ENCODE measurements at regions of chr22 and their contacts with region 1.

Region 1: DNA sequence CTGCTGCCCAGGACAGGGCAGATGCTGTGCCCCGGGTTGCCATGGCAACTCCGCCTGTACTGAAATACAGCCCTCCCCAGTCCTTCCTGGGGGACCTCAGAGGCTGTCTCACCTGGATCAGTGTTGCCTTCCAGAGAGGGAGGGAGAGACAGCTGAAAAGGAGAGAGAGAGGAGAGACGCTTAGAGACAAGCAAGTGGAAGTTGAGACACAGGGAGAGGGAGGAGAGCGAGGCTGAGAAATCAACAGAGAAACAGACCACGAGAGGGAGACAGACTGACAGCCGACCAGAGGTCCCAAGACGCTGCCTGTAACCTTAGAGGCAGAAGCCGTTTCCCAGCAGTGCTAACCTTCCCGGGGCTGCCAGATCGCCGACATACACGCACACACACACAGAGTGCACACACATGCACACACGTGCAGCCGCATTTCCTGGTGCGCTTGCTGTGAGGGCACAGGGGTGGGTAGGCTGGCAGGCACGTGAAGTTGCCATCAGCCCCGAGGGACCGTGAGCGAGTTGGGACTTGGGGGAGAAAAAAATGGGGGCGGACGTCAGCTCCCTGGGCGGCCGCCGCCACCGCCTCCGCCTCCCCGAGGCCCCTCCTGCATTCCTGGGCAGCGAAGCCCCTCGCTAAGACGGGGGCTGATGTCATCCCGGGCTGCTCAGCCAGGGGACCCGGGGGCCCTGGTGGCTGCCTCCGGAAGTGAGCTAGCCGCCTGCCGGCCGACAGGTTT is 88.6 kb upstream of the CRYBB3 start:
- DNase-seq: peak; percentile 61 to 81
- H3K4me3 ChIP-seq: peak overlapping the region; percentile 52 to 81 (median 66)
- H3K27ac ChIP-seq: peak overlapping the region; percentile 73
- H3K4me1 ChIP-seq: peaks cover 0 to 19% (median 9%) of the 10 kb centered on the region in 4 experiments; a peak in 6 of 7 replicates
- H3K27me3 ChIP-seq: 0 out of 7 replicates have a peak, but pooled peaks cover 0 to 2% (median 0%) of the 10 kb centered on the region in 4 experiments
- CTCF ChIP-seq: peak; percentile 59 to 91 (median 70)
- EP300 ChIP-seq: peak in 1 of 2 experiments; percentile 49; a peak in 1 of 3 replicates
- POLR2A ChIP-seq: no peak
- RAD21 ChIP-seq: peak; percentile 56 to 65

Region 2: DNA sequence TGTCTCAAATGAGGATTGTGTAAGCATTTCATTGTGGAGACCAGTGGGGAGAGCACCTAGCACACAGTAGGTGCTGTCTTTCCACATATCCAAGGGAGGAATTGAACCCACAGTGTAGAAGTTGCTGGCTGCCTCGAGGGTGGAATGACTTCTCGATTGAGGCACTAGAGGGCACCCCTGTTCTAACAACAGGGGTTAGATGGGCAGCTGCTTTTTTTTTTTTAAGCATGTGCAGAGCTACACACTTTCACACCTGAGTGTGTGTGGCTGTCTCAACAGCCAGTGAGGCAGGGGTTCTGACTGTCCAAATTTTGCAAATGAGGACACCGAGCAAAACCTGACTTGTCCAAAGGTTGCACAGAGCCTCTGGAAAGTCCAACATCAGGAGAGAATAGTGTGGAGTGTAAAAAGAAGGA is 29.6 kb before region 1 on chr22:
- CTCF ChIA-PET with region 1: interaction called, 32 read pairs
- POLR2A ChIA-PET with region 1: interaction called, 3 read pairs
- DNase-seq: peak in 1 of 2 experiments; percentile 66
- H3K4me3 ChIP-seq: no peak overlapping the region
- H3K27ac ChIP-seq: no peak overlapping the region
- H3K4me1 ChIP-seq: peaks cover 0 to 3% (median 0%) of the 10 kb centered on the region in 4 experiments; a peak in 2 of 7 replicates
- H3K27me3 ChIP-seq: no peaks in the 10 kb centered on the region
- CTCF ChIP-seq: peak; percentile 69 to 79 (median 77)
- EP300 ChIP-seq: no peak
- POLR2A ChIP-seq: no peak
- RAD21 ChIP-seq: peak; percentile 89 to 90

Region 3: DNA sequence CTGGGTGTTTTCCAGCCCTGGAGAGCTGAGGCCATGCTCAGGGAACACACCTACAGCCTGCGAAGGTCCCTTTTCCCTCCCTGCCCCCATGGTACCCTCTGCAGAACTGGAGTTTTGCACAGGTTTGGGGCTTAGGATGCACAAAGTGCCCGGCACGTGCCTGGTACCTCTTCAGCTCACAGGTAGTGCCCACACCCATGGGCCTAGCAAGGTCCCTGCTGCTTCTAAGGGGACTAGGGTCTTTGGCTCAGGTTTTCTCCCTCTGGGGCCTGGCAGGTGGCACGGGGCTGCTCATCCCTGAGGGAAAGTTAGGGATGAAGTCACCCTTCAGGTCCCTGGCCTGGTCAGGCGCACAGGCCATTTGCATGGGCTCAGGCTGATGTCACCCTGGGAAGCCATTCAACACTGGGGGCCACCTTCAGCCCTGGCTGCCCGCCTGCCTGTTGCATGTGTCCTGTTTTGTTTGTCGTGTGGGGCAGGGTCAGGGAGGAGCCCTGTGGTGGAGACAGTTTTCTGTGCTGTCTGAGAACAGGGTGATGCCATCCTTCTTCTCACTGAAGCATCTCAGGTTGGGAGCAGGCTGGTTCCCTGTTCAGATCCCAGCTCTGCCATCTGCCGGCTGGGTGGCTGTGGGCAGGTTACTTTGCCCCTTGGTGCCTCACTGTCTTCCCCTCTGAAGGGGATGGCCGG is 20.3 kb after region 1 on chr22:
- CTCF ChIA-PET with region 1: interaction called, 13 read pairs
- POLR2A ChIA-PET with region 1: interaction called, 5 read pairs
- DNase-seq: no peak
- H3K4me3 ChIP-seq: no peak overlapping the region
- H3K27ac ChIP-seq: no peak overlapping the region
- H3K4me1 ChIP-seq: peaks cover 0 to 21% (median 11%) of the 10 kb centered on the region in 4 experiments; a peak in 6 of 7 replicates
- H3K27me3 ChIP-seq: no peaks in the 10 kb centered on the region
- CTCF ChIP-seq: 0 out of 4 replicates have a peak, but pooled peaks of 1 of the 3 experiments have one; percentile 8
- EP300 ChIP-seq: no peak
- POLR2A ChIP-seq: no peak
- RAD21 ChIP-seq: no peak

Region 4: GRCh38 chr22:25148149-25148691 is 37.2 kb after region 1 on chr22:
- CTCF ChIA-PET with region 1: interaction called, 11 read pairs
- POLR2A ChIA-PET with region 1: interaction called, 5 read pairs
- DNase-seq: no peak
- H3K4me3 ChIP-seq: no peak overlapping the region
- H3K27ac ChIP-seq: no peak overlapping the region
- H3K4me1 ChIP-seq: peaks cover 0 to 16% (median 11%) of the 10 kb centered on the region in 4 experiments; a peak in 6 of 7 replicates
- H3K27me3 ChIP-seq: no peaks in the 10 kb centered on the region
- CTCF ChIP-seq: no peak
- EP300 ChIP-seq: no peak
- POLR2A ChIP-seq: no peak
- RAD21 ChIP-seq: peak in 1 of 2 experiments; percentile 10; a peak in 1 of 4 replicates

Region 5: GRCh38 chr22:25187469-25187868 is 76.5 kb after region 1 on chr22:
- CTCF ChIA-PET with region 1: interaction called, 11 read pairs
- POLR2A ChIA-PET with region 1: no interaction called
- DNase-seq: no peak
- H3K4me3 ChIP-seq: no peak overlapping the region
- H3K27ac ChIP-seq: no peak overlapping the region
- H3K4me1 ChIP-seq: no peaks in the 10 kb centered on the region
- H3K27me3 ChIP-seq: no peaks in the 10 kb centered on the region
- CTCF ChIP-seq: no peak
- EP300 ChIP-seq: no peak
- POLR2A ChIP-seq: no peak
- RAD21 ChIP-seq: no peak